Heart left ventricle (tissue), 16 donors: ENCODE measurements at regions of chr4 and their contacts with region 1.

Region 1: GRCh38 chr4:126223784-126224407 is 909.1 kb downstream of the FAT4 start:
- DNase-seq: no peak
- ATAC-seq: no peak
- H3K4me3 ChIP-seq: no peak overlapping the region
- H3K27ac ChIP-seq: no peak overlapping the region
- H3K4me1 ChIP-seq: peaks cover 0 to 5% (median 0%) of the 10 kb centered on the region in 12 donors
- H3K27me3 ChIP-seq: no peaks in the 10 kb centered on the region
- CTCF ChIP-seq: peak; percentile 33 to 65 (median 50)
- POLR2A ChIP-seq: no peak

Region 2: GRCh38 chr4:125938541-125938940 is 285.4 kb before region 1 on chr4:
- intact Hi-C with region 1: no loop called
- DNase-seq: no peak
- ATAC-seq: no peak
- H3K4me3 ChIP-seq: no peak overlapping the region
- H3K27ac ChIP-seq: no peak overlapping the region
- H3K4me1 ChIP-seq: no peaks in the 10 kb centered on the region
- H3K27me3 ChIP-seq: no peaks in the 10 kb centered on the region
- CTCF ChIP-seq: no peak
- POLR2A ChIP-seq: no peak

Region 3: GRCh38 chr4:126028876-126029275 is 195.0 kb before region 1 on chr4:
- intact Hi-C with region 1: no loop called
- DNase-seq: no peak
- ATAC-seq: no peak
- H3K4me3 ChIP-seq: no peak overlapping the region
- H3K27ac ChIP-seq: no peak overlapping the region
- H3K4me1 ChIP-seq: no peaks in the 10 kb centered on the region
- H3K27me3 ChIP-seq: no peaks in the 10 kb centered on the region
- CTCF ChIP-seq: no peak
- POLR2A ChIP-seq: no peak

Region 4: GRCh38 chr4:126405369-126405982 is 181.6 kb after region 1 on chr4:
- intact Hi-C with region 1: loop called in 2 of 10 experiments (anchors 10 kb)
- DNase-seq: no peak
- ATAC-seq: peak in 2 of 4 donors; percentile 34 to 63
- H3K4me3 ChIP-seq: no peak overlapping the region
- H3K27ac ChIP-seq: no peak overlapping the region
- H3K4me1 ChIP-seq: no peaks in the 10 kb centered on the region
- H3K27me3 ChIP-seq: no peaks in the 10 kb centered on the region
- CTCF ChIP-seq: peak in 9 of 12 donors; percentile 13 to 49 (median 40)
- POLR2A ChIP-seq: no peak

Region 5: DNA sequence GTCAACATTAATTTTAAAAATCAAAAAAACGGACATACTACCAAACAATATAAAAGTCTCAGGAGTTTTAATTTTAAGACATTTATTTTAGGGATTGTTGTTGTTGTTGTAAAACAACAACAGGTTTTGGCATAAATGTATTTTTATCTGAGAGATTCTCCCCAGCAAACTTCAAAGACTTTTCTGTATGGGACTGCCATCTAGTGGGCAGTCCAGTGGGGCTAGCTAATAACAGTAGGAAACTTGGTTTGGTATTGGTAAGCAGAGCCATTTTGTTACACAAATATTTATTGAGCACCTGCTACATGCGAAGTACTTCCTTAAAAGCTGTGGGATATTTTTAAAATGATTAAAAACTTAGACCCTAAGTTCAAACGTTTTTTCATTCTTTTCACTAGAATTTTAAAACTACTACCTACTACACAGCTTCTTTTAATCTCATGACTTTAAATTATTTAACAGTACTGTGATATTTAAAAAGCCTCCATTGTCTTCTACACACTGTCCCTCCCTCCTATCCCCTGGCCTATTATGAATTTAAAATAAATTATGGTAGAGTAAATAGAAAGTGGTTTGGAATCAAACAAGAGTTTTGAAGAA is 380.5 kb after region 1 on chr4:
- intact Hi-C with region 1: loop called in 1 of 10 experiments (anchors 10 kb)
- DNase-seq: peak in 1 of 5 donors; percentile 37
- ATAC-seq: peak in 1 of 4 donors; percentile 68
- H3K4me3 ChIP-seq: no peak overlapping the region
- H3K27ac ChIP-seq: no peak overlapping the region
- H3K4me1 ChIP-seq: no peaks in the 10 kb centered on the region
- H3K27me3 ChIP-seq: no peaks in the 10 kb centered on the region
- CTCF ChIP-seq: peak; percentile 39 to 73 (median 60)
- POLR2A ChIP-seq: no peak

Region 6: DNA sequence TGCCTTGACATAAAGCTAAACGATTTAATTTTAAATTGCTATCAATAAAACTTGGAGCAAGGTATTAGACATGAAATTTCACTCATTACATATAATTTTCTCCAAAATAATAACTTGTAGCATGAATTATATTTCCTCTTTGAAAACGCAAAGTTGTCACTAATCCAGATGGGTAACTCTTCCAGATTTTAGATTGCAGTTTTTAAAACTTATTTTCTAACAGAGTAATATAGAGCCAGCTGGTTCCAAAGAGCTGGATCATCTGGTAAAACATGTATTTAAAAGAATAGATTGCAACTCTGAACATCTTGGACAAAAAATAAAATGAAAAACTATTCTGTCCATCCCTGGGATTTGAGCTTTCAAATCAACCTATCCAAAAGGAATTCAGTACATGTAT is 1170.6 kb after region 1 on chr4:
- intact Hi-C with region 1: loop called in 1 of 10 experiments (anchors 10 kb)
- DNase-seq: no peak
- ATAC-seq: no peak
- H3K4me3 ChIP-seq: no peak overlapping the region
- H3K27ac ChIP-seq: no peak overlapping the region
- H3K4me1 ChIP-seq: no peaks in the 10 kb centered on the region
- H3K27me3 ChIP-seq: no peaks in the 10 kb centered on the region
- CTCF ChIP-seq: no peak
- POLR2A ChIP-seq: no peak